H1 (cell line): ENCODE measurements at regions of chr2 and their contacts with region 1.

Region 1: GRCh38 chr2:16773080-16773713 is 107.6 kb upstream of the CYRIA start:
- DNase-seq: peak in 1 of 2 experiments; percentile 62
- H3K4me3 ChIP-seq: no peak overlapping the region
- H3K27ac ChIP-seq: no peak overlapping the region
- H3K4me1 ChIP-seq: peaks cover 0 to 12% (median 3%) of the 10 kb centered on the region in 4 experiments; a peak in 2 of 7 replicates
- H3K27me3 ChIP-seq: no peaks in the 10 kb centered on the region
- CTCF ChIP-seq: peak; percentile 53 to 79 (median 72)
- EP300 ChIP-seq: no peak
- POLR2A ChIP-seq: no peak
- RAD21 ChIP-seq: peak; percentile 96 to 98

Region 2: GRCh38 chr2:16750175-16750924 is 22.8 kb before region 1 on chr2:
- CTCF ChIA-PET with region 1: no interaction called
- POLR2A ChIA-PET with region 1: no interaction called
- DNase-seq: no peak
- H3K4me3 ChIP-seq: no peak overlapping the region
- H3K27ac ChIP-seq: no peak overlapping the region
- H3K4me1 ChIP-seq: no peaks in the 10 kb centered on the region
- H3K27me3 ChIP-seq: peaks cover 0 to 1% (median 0%) of the 10 kb centered on the region in 4 experiments; a peak in 1 of 7 replicates
- CTCF ChIP-seq: no peak
- EP300 ChIP-seq: no peak
- POLR2A ChIP-seq: no peak
- RAD21 ChIP-seq: no peak

Region 3: DNA sequence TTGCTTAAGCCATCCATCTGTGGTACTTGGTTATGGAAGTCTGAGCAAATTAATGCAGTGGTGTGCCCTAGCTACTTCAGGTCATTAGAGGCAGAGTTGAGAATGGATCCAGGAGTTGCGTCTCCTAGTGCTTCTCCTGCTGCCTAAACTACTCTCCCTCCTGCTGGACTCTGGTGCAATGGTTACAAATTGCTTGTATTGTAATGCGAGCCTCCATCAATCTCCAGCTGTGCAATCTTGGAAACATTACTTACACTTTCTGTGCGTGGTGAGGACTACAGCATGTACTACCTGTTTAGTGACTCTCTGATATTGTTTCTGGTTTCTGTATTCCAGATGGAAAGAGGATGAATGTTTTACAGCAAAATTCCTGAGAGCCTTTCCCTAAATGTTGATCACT is 11.5 kb after region 1 on chr2:
- CTCF ChIA-PET with region 1: interaction called, 51 read pairs
- POLR2A ChIA-PET with region 1: interaction called, 4 read pairs
- DNase-seq: no peak
- H3K4me3 ChIP-seq: no peak overlapping the region
- H3K27ac ChIP-seq: no peak overlapping the region
- H3K4me1 ChIP-seq: peaks cover 0 to 4% (median 2%) of the 10 kb centered on the region in 4 experiments; a peak in 3 of 7 replicates
- H3K27me3 ChIP-seq: no peaks in the 10 kb centered on the region
- CTCF ChIP-seq: no peak
- EP300 ChIP-seq: no peak
- POLR2A ChIP-seq: no peak
- RAD21 ChIP-seq: no peak

Region 4: DNA sequence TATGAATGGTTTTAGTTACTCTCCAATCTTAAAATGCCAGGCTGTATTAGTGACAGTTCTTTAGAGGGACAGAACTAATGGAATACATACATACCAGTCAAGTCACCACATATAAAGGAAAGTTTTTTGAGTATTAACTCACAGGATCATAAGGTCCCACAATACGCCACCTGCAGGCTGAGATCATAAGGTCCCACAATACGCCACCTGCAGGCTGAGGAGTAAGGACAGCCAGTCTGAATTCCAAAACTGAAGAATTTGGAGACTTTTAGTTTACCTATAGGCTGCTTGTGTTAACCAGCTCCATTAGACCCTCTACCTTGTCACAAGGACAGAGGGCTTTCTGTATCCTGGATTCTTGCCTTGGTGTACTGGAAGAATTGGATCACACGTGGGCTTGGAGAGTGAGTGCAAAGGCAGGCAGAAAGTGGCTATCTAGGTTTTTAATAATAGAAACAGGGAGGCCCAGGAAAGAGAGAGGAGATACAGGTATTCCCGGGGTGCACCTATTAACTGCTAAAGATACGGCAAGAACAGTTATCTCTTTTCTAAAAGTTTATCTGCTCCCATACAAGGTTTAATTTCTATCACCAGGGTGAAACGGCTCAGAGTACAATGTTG is 127.3 kb after region 1 on chr2:
- CTCF ChIA-PET with region 1: interaction called, 63 read pairs
- POLR2A ChIA-PET with region 1: no interaction called
- DNase-seq: peak; percentile 29 to 63
- H3K4me3 ChIP-seq: no peak overlapping the region
- H3K27ac ChIP-seq: no peak overlapping the region
- H3K4me1 ChIP-seq: no peaks in the 10 kb centered on the region
- H3K27me3 ChIP-seq: no peaks in the 10 kb centered on the region
- CTCF ChIP-seq: peak; percentile 69 to 100 (median 94)
- EP300 ChIP-seq: no peak
- POLR2A ChIP-seq: no peak
- RAD21 ChIP-seq: peak; percentile 70 to 78

Region 5: GRCh38 chr2:17171446-17172049 is 398.4 kb after region 1 on chr2:
- CTCF ChIA-PET with region 1: interaction called, 15 read pairs
- POLR2A ChIA-PET with region 1: no interaction called
- DNase-seq: peak; percentile 27 to 64
- H3K4me3 ChIP-seq: no peak overlapping the region
- H3K27ac ChIP-seq: no peak overlapping the region
- H3K4me1 ChIP-seq: no peaks in the 10 kb centered on the region
- H3K27me3 ChIP-seq: peaks cover 0 to 1% (median 0%) of the 10 kb centered on the region in 4 experiments; a peak in 1 of 7 replicates
- CTCF ChIP-seq: peak; percentile 67 to 88 (median 85)
- EP300 ChIP-seq: no peak
- POLR2A ChIP-seq: no peak
- RAD21 ChIP-seq: peak; percentile 65 to 68

Region 6: DNA sequence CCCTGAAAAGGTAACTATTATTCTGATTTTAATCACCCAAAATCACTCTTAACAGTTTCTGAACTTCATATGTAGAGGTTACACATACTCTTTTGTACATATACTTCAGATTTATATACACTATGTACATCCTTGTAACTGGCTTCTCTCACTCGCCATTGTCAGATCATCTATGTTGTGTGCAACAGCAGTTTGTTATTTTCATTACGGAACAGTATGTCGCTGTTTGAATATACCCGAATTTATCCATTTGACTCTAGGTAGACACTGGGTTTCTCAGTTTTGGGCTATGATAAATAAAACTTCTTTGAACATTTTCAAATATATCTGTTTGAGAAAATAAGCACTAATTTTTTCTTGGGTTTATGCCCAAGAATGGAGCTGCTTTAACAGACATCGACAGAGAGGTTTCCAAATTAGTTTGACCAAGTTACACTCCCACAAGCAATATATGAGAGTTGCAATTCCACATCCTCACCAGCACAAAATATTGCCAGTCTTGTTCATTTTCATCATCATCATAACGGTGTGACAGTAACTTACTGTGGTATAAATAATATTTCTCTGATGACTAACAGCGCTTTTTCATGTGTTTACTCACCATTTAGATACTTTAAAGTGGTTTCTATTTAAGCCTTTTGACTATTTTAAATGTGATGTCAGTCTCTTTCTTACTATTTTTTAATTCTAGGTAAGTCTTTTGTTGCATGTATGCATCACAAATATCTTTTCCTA is 899.6 kb after region 1 on chr2:
- CTCF ChIA-PET with region 1: interaction called, 10 read pairs
- POLR2A ChIA-PET with region 1: no interaction called
- DNase-seq: no peak
- H3K4me3 ChIP-seq: no peak overlapping the region
- H3K27ac ChIP-seq: no peak overlapping the region
- H3K4me1 ChIP-seq: no peaks in the 10 kb centered on the region
- H3K27me3 ChIP-seq: no peaks in the 10 kb centered on the region
- CTCF ChIP-seq: no peak
- EP300 ChIP-seq: no peak
- POLR2A ChIP-seq: no peak
- RAD21 ChIP-seq: no peak